Right ventricle myocardium superior (tissue), 1 donor: ENCODE measurements at regions of chr19 and their contacts with region 1.

Region 1: GRCh38 chr19:18112989-18113478 is 15.5 kb downstream of the MAST3 start:
- DNase-seq: peak; percentile 92
- ATAC-seq: peak; percentile 63

Region 2: DNA sequence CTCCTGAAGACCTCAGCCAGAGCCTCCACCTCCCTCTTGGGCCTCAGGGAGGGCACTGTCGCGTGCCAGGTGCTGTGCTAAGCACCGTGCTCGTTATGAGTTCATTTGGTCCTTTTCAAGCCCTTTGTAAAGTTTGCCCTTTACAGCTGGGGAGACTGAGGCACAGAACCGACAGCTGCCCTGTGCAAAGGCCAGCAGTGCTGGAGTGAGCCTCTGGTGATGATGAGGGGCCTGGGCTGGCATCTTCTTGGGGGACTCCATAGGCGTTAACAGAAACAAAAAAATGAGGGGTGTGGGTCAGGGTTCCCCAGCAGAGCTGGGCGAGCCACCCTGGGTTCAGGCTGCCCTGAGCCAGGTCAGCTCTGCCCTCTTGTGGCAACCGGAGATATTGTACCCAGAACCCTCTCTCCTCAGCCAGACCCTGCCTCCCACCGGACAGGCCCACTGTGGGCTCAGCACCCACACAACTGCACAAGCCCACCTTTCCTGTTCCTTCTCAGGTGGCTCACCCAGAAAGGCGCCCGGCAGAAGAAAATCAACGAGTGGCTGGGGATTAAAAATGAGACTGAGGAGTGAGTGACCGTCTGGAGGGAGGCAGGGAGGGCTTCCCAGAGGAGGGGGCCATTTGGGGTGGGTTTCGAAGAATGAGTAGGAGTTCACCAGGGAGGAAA is 55.1 kb after region 1 on chr19:
- intact Hi-C with region 1: loop called (anchors 5 kb)
- DNase-seq: peak; percentile 62
- ATAC-seq: peak; percentile 47

Region 3: DNA sequence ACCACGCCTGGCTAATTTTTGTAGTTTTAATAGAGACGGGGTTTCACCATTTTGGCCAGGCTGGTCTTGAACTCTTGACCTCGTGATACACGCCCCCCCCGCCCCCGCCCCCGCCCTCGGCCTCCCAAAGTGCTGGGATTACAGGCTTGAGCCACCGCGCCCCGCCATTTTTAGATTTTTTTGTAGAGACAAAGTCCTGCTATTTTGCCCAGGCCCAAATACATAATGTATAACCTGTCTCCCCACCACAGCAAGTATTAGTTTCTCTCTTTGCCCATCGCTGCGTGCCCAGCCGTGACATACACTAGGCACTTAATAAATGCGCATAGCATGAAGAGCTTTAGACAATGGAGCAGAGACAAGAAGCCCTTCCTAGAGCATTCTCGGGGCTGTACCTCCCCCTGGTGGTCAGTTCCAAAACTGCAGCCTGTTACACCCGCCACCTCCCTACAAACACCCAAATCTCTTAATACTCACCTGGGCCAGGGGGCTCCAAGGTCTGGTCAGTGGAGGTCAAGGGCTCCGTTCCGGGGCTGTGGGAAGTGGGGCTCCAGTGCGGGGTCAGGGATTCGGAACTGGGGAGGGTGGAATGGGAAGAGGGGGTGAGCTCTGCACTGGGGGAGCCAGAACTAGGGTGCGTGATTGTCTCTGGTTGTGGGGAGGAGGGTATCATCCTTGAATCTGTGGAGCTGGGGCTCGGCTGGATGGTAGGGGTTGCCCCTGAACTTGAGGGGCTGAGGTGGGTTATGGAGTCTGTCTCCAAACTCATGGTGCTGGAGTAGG is 138.7 kb after region 1 on chr19:
- intact Hi-C with region 1: loop called (anchors 5 kb)
- DNase-seq: peak; percentile 76
- ATAC-seq: peak; percentile 80

Region 4: GRCh38 chr19:18291590-18292461 is 178.8 kb after region 1 on chr19:
- intact Hi-C with region 1: no loop called
- DNase-seq: peak; percentile 90
- ATAC-seq: peak; percentile 87